ENCODE measurements at regions of chr1 and their contacts with region 1.

Region 1: GRCh38 chr1:232630047-232630893 is at the start of gene SIPA1L2:
- DNase-seq: peak; percentile 97
- H3K4me3 Mint-ChIP-seq: peak within 1 kb of the TSS; percentile 97
- H3K27ac Mint-ChIP-seq: peak within 1 kb of the TSS; percentile 76
- H3K4me1 Mint-ChIP-seq: peaks cover 33% of the 10 kb centered on the region
- H3K27me3 Mint-ChIP-seq: no peaks in the 10 kb centered on the region
- CTCF ChIP-seq: peak; percentile 72
- total RNA-seq, gene SIPA1L2: 15.2 and 18.3 TPM in 2 replicates

Region 2: DNA sequence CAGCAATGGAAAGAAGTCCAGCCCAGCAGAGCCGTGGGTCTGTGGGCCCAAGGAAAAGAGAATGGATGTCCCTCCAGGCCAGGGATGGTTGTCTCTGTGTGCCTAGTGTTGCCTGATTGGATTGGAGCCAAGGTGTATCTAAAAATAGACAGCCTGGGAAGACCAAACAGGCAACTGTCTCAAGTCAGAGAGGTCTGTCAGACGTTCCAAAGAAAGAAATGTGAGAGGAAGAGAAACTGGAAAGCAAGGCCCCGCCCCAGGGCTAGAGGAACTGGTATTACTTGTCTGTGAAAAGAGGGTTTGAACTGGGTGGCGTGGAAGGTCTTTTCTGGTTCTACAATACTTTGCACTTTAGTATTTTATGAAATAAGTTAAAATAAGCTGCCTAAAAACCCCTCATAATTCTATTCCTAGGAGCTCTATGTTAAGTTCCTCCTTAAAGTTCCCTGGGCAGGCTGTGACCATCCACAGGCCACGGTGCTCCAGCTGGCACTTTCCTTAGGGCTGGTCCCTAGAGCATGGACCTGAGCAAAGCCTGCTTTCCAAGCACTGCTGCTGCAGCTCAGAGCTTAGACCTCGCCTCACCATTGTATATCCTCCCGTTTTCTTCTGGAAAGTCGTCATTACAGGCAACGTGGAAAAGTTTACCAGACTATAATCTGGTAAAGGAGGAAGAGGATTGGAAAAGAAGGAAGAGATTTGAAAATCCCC is 852.1 kb before region 1 on chr1:
- CTCF ChIA-PET with region 1: interaction called, 11 read pairs
- POLR2A ChIA-PET with region 1: no interaction called
- intact Hi-C with region 1: no loop called
- DNase-seq: peak; percentile 60
- H3K4me3 Mint-ChIP-seq: no peak overlapping the region
- H3K27ac Mint-ChIP-seq: no peak overlapping the region
- H3K4me1 Mint-ChIP-seq: peaks cover 8% of the 10 kb centered on the region
- H3K27me3 Mint-ChIP-seq: no peaks in the 10 kb centered on the region
- CTCF ChIP-seq: no peak

Region 3: DNA sequence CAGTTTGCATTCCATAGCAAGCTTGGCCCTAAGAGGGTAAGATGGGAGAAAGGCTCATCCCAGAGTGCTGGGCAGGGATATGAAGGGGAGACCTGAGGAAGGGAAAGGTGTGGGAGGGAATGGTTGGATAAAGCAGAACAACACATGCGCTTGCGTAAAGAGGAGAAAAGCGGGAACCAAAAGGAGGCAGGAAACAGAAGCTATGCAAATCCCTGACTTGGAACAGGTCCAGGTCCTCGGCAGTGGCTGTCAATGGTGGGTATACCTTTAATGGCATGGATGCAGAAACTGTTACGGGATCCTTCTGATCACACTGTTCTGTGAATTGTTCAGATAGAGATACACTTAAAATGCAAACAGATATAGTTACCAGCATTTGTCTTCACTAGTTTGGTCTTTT is 456.0 kb before region 1 on chr1:
- CTCF ChIA-PET with region 1: interaction called, 6 read pairs
- POLR2A ChIA-PET with region 1: no interaction called
- intact Hi-C with region 1: loop called (anchors 1 kb)
- DNase-seq: no peak
- H3K4me3 Mint-ChIP-seq: no peak overlapping the region
- H3K27ac Mint-ChIP-seq: no peak overlapping the region
- H3K4me1 Mint-ChIP-seq: no peaks in the 10 kb centered on the region
- H3K27me3 Mint-ChIP-seq: no peaks in the 10 kb centered on the region
- CTCF ChIP-seq: no peak

Region 4: DNA sequence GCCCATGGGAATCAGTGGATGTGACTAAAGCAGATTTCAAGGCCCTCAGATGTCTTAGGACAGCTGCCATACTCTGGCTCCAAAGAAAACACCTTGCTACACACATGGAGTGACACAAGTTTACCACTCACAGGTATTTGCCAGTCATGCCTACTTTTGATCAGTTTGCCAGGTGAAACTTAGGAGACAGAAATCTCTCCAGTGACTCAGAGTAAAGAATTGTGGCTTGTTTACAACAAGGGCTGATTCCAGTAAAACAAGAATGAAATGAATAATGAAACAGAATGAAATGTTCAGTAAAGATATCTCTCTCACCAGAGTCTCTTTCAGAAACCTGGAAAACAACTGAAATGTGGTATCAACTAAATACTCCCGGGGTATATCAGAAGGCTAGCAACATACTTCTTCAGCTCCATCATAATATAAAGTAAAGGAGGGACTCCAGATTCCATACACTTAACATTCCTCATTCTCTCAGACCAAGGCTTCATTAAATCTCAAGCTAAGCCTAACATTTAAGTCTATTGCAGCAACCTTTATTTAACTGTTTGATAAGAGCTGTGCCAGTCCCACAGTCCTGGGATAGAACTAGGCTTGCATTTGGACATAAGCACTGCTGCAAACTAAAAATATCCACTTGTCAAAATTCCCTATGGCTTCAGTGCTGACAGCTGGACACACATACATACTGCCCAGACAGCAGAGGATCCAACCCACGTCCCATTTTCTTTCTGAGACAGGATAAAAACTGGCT is 143.6 kb before region 1 on chr1:
- CTCF ChIA-PET with region 1: interaction called, 19 read pairs
- POLR2A ChIA-PET with region 1: interaction called, 12 read pairs
- intact Hi-C with region 1: loop called (anchors 5 kb)
- DNase-seq: peak; percentile 89
- H3K4me3 Mint-ChIP-seq: no peak overlapping the region
- H3K27ac Mint-ChIP-seq: peak overlapping the region; percentile 92
- H3K4me1 Mint-ChIP-seq: peaks cover 15% of the 10 kb centered on the region
- H3K27me3 Mint-ChIP-seq: no peaks in the 10 kb centered on the region
- CTCF ChIP-seq: no peak

Region 5: DNA sequence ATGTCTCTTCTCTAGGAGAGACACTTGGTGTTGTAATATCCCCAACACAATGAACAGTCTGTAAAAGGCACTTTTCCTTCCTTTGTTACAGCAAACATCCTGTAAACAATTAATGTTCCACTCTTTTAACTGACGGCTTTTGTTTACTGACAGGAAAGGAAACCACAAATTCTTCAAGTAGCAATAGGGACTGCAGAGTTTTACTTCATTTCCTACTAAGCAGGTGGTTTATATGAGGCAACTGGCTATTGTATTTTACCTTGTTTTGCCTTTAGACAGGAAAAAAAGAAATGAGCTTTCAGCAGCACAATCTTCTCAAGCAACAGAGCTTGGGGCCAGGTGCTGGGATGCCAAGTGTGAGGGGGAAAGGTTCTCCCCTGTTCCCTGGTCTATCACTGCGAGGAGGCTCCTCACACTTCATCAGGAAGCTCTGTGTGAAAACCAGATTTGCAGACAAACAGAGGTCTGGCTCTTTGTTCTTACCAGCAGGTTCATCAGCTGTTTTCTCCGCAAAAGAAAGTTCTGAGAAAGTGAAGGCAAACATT is 51.5 kb before region 1 on chr1:
- CTCF ChIA-PET with region 1: interaction called, 11 read pairs
- POLR2A ChIA-PET with region 1: interaction called, 8 read pairs
- intact Hi-C with region 1: no loop called
- DNase-seq: no peak
- H3K4me3 Mint-ChIP-seq: no peak overlapping the region
- H3K27ac Mint-ChIP-seq: no peak overlapping the region
- H3K4me1 Mint-ChIP-seq: peaks cover 30% of the 10 kb centered on the region
- H3K27me3 Mint-ChIP-seq: no peaks in the 10 kb centered on the region
- CTCF ChIP-seq: no peak

Region 6: DNA sequence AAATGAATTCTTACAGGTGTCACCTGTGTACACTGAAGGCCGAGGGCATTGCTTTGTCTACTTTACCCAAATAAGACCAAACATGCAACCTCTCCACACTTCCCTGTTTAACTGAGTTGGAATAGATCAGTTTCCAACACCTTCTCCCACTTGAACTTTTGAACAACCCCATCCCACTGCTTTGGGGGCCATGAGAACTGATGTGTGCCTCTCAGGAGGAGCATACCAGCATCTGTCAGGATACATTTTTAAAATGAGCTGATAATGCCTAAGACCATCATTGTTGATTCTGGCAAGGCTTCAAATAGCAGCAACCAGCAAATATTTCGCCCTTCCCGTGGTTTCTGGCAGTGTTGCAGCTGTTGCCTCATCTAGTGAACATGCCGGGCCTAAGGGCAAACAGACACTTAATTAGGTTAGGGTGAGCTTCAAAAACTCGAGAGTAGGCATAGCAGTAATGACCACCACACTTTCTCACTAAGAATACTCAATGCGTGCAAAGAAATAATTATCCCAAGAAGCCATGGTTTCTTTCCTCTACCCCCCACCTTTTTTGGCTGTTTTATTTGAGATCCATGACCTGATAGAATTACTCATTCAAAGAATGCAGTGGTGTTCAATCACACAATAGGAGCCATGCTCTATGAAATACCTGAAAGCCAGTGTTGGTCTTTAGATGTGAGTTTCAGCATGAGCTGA is 238.7 kb after region 1 on chr1:
- CTCF ChIA-PET with region 1: interaction called, 3 read pairs
- POLR2A ChIA-PET with region 1: no interaction called
- intact Hi-C with region 1: loop called (anchors 2 kb)
- DNase-seq: peak; percentile 100
- H3K4me3 Mint-ChIP-seq: no peak overlapping the region
- H3K27ac Mint-ChIP-seq: peak overlapping the region; percentile 79
- H3K4me1 Mint-ChIP-seq: peaks cover 21% of the 10 kb centered on the region
- H3K27me3 Mint-ChIP-seq: no peaks in the 10 kb centered on the region
- CTCF ChIP-seq: no peak

Region 7: GRCh38 chr1:233295237-233295974 is 665.1 kb after region 1 on chr1 and contains the start of gene PCNX2:
- CTCF ChIA-PET with region 1: interaction called, 3 read pairs
- POLR2A ChIA-PET with region 1: interaction called, 7 read pairs
- intact Hi-C with region 1: loop called (anchors 5 kb)
- DNase-seq: peak; percentile 88
- H3K4me3 Mint-ChIP-seq: peak within 1 kb of the TSS; percentile 81
- H3K27ac Mint-ChIP-seq: peak within 1 kb of the TSS; percentile 68
- H3K4me1 Mint-ChIP-seq: peaks cover 28% of the 10 kb centered on the region
- H3K27me3 Mint-ChIP-seq: no peaks in the 10 kb centered on the region
- CTCF ChIP-seq: no peak
- total RNA-seq, gene PCNX2: 80.5 and 85.3 TPM in 2 replicates

Measured in MCF 10A (cell line).